ENCODE measurements at regions of chr1 and their contacts with region 1.

Region 1: GRCh38 chr1:43706598-43707495 is 489 bp upstream of the ST3GAL3 start:
- DNase-seq: peak; percentile 97
- ATAC-seq: peak; percentile 97
- H3K4me3 Mint-ChIP-seq: peak overlapping the region; percentile 89
- H3K27ac Mint-ChIP-seq: peak overlapping the region; percentile 83
- H3K4me1 Mint-ChIP-seq: peaks cover 32% of the 10 kb centered on the region
- H3K27me3 Mint-ChIP-seq: no peaks in the 10 kb centered on the region

Region 2: GRCh38 chr1:42958488-42959319 is 748.1 kb before region 1 on chr1 and contains the start of gene SLC2A1:
- CTCF ChIA-PET with region 1: no interaction called
- POLR2A ChIA-PET with region 1: no interaction called
- intact Hi-C with region 1: loop called in 1 of 2 experiments (anchors 1 kb)
- DNase-seq: peak; percentile 99
- ATAC-seq: peak; percentile 89
- H3K4me3 Mint-ChIP-seq: peak within 1 kb of the TSS; percentile 89
- H3K27ac Mint-ChIP-seq: peak within 1 kb of the TSS; percentile 97
- H3K4me1 Mint-ChIP-seq: peaks cover 47% of the 10 kb centered on the region
- H3K27me3 Mint-ChIP-seq: peaks cover 6% of the 10 kb centered on the region
- total RNA-seq, gene SLC2A1: 115 to 125 TPM

Region 3: GRCh38 chr1:43454266-43455011 is 252.4 kb before region 1 on chr1:
- CTCF ChIA-PET with region 1: interaction called, 4 read pairs
- POLR2A ChIA-PET with region 1: no interaction called
- intact Hi-C with region 1: loop called in 1 of 2 experiments (anchors 2 kb)
- DNase-seq: peak; percentile 78
- ATAC-seq: peak; percentile 92
- H3K4me3 Mint-ChIP-seq: peak overlapping the region; percentile 79
- H3K27ac Mint-ChIP-seq: peak overlapping the region; percentile 79
- H3K4me1 Mint-ChIP-seq: peaks cover 17% of the 10 kb centered on the region
- H3K27me3 Mint-ChIP-seq: peaks cover 16% of the 10 kb centered on the region

Region 4: DNA sequence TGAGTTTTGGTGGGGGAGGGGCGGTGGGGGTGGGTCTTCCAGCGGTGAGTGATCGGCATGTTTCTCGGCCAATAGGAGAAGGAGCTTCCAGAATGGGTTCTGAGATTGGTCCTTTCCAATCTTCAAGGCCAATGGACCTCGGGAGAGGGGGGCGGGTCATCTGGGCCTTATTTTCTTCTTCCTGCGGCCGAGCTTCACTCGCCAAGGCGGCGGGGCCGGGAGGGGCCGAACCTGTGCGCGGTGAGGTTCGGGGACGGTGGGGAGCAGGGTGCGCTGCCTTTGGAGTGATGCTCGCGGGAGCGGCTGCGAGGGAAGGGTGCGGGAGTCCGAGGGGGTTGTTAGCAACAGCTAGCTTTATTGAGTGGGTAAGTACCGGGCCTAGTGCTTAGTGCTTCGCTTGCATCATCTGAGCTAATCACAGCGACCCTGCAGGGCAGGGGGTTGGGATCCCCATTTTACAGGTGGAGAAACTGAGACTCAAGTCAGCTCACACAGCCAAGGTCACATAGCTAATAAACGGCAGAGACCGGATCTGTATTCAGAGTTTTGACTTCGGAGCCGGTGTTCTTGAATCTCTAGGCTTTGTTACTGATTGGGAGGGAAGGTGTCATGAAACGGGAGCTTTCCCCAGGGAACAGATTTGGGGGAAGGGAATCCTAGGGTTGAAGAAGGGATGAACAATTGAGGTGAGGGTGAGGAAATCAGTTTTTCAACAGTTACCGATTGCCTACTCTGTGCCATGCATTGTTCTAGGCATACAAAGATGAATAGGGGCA is 56.3 kb before region 1 on chr1:
- CTCF ChIA-PET with region 1: interaction called, 5 read pairs
- POLR2A ChIA-PET with region 1: interaction called, 13 read pairs
- intact Hi-C with region 1: loop called (anchors 1 to 2 kb)
- DNase-seq: peak; percentile 95
- ATAC-seq: peak; percentile 81
- H3K4me3 Mint-ChIP-seq: peak overlapping the region; percentile 89
- H3K27ac Mint-ChIP-seq: peak overlapping the region; percentile 97
- H3K4me1 Mint-ChIP-seq: peaks cover 31% of the 10 kb centered on the region
- H3K27me3 Mint-ChIP-seq: no peaks in the 10 kb centered on the region

Region 5: DNA sequence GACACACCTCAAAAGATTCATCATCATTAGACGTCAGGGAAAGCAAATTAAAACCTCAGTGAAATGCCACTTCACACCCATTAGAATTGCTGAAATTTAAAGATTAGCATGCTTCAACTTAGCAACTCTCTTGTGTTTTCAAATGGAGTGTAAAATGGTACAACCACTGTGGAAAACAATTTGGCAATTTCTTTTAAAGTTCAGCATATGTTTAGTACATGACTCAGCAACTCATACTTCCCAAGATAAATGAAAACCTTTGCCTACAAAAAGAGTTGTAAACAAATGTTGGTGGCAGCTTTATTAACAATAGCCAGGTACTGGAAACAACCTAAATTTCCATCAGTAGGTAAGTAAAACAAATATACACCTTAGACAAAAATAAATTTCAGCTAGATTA is 43.2 kb after region 1 on chr1:
- CTCF ChIA-PET with region 1: no interaction called
- POLR2A ChIA-PET with region 1: no interaction called
- intact Hi-C with region 1: no loop called
- DNase-seq: no peak
- ATAC-seq: no peak
- H3K4me3 Mint-ChIP-seq: no peak overlapping the region
- H3K27ac Mint-ChIP-seq: no peak overlapping the region
- H3K4me1 Mint-ChIP-seq: peaks cover 3% of the 10 kb centered on the region
- H3K27me3 Mint-ChIP-seq: no peaks in the 10 kb centered on the region

Region 6: DNA sequence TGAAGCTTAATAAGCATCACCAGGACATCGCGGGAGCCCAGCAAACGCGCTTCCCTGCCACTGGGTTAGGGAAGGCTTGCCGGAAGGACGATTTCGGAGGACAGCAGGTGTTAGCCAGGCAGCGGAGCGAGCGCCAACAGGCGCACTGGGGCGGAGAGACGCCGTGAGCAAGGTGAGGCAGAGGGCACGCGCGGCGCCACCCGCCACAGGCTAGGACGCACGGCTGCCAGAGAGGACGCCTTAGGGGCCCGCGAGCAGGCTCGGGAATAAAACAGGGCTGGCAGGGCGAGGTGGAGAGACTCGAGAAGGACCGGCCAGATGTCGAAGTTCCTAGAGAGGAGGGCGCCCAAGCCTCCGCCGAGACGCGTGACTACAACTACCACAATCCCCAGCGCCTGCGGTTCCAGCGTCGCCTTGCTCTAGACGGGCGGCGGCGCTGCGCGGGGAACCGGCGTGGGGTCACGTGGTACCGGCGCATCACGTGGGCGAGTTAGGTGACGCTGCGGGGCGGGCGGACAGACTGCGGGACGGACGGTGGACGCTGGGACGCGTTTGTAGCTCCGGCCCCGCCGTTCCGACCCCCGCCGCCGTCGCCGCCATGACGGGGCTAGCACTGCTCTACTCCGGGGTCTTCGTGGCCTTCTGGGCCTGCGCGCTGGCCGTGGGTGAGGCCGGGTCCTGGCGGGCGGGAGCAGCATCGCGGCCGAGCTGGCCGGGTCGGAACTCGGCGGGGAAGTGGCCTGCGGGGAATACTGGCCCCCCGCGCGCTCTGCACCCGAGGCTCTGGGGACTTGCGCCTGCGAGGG is 267.8 kb after region 1 on chr1 and contains the start of gene ATP6V0B:
- CTCF ChIA-PET with region 1: interaction called, 4 read pairs
- POLR2A ChIA-PET with region 1: no interaction called
- intact Hi-C with region 1: loop called in 1 of 2 experiments (anchors 1 kb)
- DNase-seq: peak; percentile 99
- ATAC-seq: peak; percentile 76
- H3K4me3 Mint-ChIP-seq: peak within 1 kb of the TSS; percentile 81
- H3K27ac Mint-ChIP-seq: peak within 1 kb of the TSS; percentile 88
- H3K4me1 Mint-ChIP-seq: peaks cover 48% of the 10 kb centered on the region
- H3K27me3 Mint-ChIP-seq: no peaks in the 10 kb centered on the region
- total RNA-seq, gene ATP6V0B: 39.4 to 75.6 TPM

Region 7: DNA sequence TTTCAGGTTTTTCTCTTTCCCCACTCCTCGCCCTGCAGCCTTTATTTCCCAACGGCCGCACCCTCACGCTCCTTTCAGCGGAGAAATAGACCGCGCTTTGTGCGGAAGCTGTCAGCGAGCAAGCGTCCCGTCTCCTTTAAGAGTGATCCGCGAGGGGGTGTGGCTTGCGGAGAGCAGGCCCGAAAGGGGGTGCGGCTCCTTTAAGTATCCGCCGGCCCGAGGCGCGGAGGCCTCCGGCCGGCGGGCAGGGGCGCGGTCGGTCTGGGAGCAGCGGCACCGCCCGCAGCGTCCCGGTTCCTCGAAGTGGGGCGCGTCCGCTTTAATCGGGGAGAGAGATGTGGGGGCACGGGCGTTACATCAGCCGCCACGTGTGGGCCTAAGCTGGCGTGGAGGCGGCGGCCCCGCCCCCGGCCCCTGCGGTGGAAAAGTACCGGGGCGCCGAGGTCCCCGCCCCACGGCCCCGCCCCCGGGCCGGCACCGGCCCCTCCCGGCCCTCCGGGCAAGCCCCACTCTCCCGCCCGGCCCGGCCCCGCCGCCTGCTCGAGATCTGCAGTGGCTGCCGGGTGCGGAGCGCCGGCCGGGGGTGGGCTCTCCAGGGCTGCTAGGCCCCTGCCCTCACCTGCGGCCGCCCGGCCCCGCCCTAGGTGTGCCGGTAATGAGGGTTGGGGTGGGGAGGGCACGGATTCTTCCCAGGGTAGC is 323.2 kb after region 1 on chr1:
- CTCF ChIA-PET with region 1: no interaction called
- POLR2A ChIA-PET with region 1: no interaction called
- intact Hi-C with region 1: loop called (anchors 1 to 5 kb)
- DNase-seq: peak; percentile 94
- ATAC-seq: peak; percentile 83
- H3K4me3 Mint-ChIP-seq: peak overlapping the region; percentile 88
- H3K27ac Mint-ChIP-seq: peak overlapping the region; percentile 96
- H3K4me1 Mint-ChIP-seq: peaks cover 24% of the 10 kb centered on the region
- H3K27me3 Mint-ChIP-seq: no peaks in the 10 kb centered on the region

Measured in activated CD4-positive, alpha-beta T cell treated with anti-CD3 and anti-CD28 coated beads for 36 hours (primary cell).